K562 (cell line): ENCODE measurements at regions of chr19 and their contacts with region 1.

Region 1: GRCh38 chr19:28633319-28634018 is 579.5 kb downstream of the UQCRFS1 start:
- DNase-seq: peak; percentile 73 to 83 (median 78)
- ATAC-seq: peak; percentile 90
- H3K4me3 ChIP-seq: no peak overlapping the region
- H3K27ac ChIP-seq: no peak overlapping the region; the same call in 2 of the 3 replicates
- H3K4me1 ChIP-seq: peaks cover 8 to 16% of the 10 kb centered on the region in 2 experiments; a peak in 4 of 5 replicates
- H3K27me3 ChIP-seq: no peaks in the 10 kb centered on the region
- CTCF ChIP-seq: peak; percentile 92 to 97 (median 96)
- EP300 ChIP-seq: peak; percentile 30; the same call in 1 of the 2 replicates
- POLR2A ChIP-seq: no peak
- RAD21 ChIP-seq: peak; percentile 89 to 98

Region 2: GRCh38 chr19:28466107-28467045 is 167.1 kb before region 1 on chr19:
- CTCF ChIA-PET with region 1: interaction called, 24 read pairs
- POLR2A ChIA-PET with region 1: no interaction called
- in situ Hi-C with region 1: loop called (anchors 5 kb)
- intact Hi-C with region 1: loop called (anchors 1 kb)
- DNase-seq: peak; percentile 66 to 81 (median 71)
- ATAC-seq: peak; percentile 73
- H3K4me3 ChIP-seq: no peak overlapping the region
- H3K27ac ChIP-seq: peak overlapping the region; percentile 6; the same call in 1 of the 3 replicates
- H3K4me1 ChIP-seq: peaks cover 2 to 16% of the 10 kb centered on the region in 2 experiments; a peak in 3 of 5 replicates
- H3K27me3 ChIP-seq: no peaks in the 10 kb centered on the region
- CTCF ChIP-seq: peak; percentile 73 to 84 (median 80)
- EP300 ChIP-seq: no peak
- POLR2A ChIP-seq: no peak
- RAD21 ChIP-seq: peak; percentile 65 to 77

Region 3: DNA sequence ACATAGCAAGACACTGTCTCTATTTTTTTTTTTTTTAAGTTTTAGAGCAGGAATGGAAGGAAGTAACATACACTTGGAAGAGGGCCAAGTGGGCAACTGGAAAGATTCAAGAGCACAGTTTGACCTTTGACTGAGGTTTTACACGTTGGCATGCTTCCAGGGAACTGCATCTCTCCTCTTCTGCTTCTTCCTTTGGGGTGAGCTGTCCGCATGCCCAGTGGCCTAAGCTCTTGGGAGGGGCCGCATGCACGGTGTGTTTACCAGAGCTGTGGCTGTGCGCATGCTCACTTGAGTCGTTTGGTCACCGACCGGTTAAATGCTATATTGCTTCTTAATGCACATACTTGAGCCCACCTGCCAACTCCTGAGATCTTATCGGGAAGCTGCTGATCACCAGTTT is 148.2 kb before region 1 on chr19:
- CTCF ChIA-PET with region 1: no interaction called
- POLR2A ChIA-PET with region 1: no interaction called
- in situ Hi-C with region 1: no loop called
- intact Hi-C with region 1: loop called (anchors 5 kb)
- DNase-seq: peak in 1 of 4 experiments; percentile 43
- ATAC-seq: no peak
- H3K4me3 ChIP-seq: no peak overlapping the region
- H3K27ac ChIP-seq: no peak overlapping the region
- H3K4me1 ChIP-seq: peaks cover 14 to 24% of the 10 kb centered on the region in 2 experiments
- H3K27me3 ChIP-seq: no peaks in the 10 kb centered on the region
- CTCF ChIP-seq: no peak
- EP300 ChIP-seq: no peak
- POLR2A ChIP-seq: no peak; the same call in 1 of the 2 replicates
- RAD21 ChIP-seq: no peak

Region 4: DNA sequence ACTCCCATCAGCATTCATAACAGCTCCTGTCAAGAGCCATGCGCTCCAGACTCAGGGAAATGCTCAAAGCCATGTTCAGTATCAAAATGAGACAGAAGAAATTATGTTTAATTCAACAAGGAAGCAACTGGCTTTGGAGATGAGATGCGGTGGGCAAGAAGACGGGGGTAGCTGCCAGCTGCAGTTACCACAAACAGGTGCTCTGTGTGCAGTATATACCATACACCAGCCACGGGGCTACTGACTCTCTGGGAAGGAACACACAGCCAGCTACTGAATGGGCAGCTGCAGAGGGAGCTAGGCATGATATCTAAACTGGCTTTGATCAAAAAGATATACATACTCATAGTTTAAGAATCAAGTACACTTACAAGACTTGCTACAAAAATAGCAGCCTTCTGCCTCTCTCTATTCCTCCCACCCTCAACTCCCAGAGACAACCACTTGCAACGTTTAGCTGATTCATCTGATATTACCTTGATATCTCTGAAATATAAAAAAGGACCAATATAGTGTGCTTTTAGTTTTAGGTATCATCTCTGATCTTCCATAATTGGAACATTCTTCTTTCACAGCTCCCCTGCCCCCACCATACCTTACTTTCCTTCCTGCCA is 13.5 kb before region 1 on chr19:
- CTCF ChIA-PET with region 1: no interaction called
- POLR2A ChIA-PET with region 1: interaction called, 14 read pairs
- in situ Hi-C with region 1: no loop called
- intact Hi-C with region 1: no loop called
- DNase-seq: no peak
- ATAC-seq: no peak
- H3K4me3 ChIP-seq: no peak overlapping the region
- H3K27ac ChIP-seq: no peak overlapping the region
- H3K4me1 ChIP-seq: peaks cover 5 to 6% of the 10 kb centered on the region in 2 experiments; a peak in 3 of 5 replicates
- H3K27me3 ChIP-seq: no peaks in the 10 kb centered on the region
- CTCF ChIP-seq: no peak
- EP300 ChIP-seq: no peak
- POLR2A ChIP-seq: no peak
- RAD21 ChIP-seq: no peak

Region 5: GRCh38 chr19:28815257-28815656 is 181.8 kb after region 1 on chr19:
- CTCF ChIA-PET with region 1: no interaction called
- POLR2A ChIA-PET with region 1: no interaction called
- in situ Hi-C with region 1: no loop called
- intact Hi-C with region 1: no loop called
- DNase-seq: no peak
- ATAC-seq: no peak
- H3K4me3 ChIP-seq: no peak overlapping the region
- H3K27ac ChIP-seq: no peak overlapping the region
- H3K4me1 ChIP-seq: no peaks in the 10 kb centered on the region
- H3K27me3 ChIP-seq: no peaks in the 10 kb centered on the region
- CTCF ChIP-seq: no peak
- EP300 ChIP-seq: no peak
- POLR2A ChIP-seq: no peak
- RAD21 ChIP-seq: no peak